ENCODE measurements at regions of chr6 and their contacts with region 1.

Region 1: GRCh38 chr6:164159061-164159460 is 744.5 kb downstream of the QKI start:
- DNase-seq: no peak
- H3K4me3 ChIP-seq: no peak overlapping the region
- CTCF ChIP-seq: no peak
- POLR2A ChIP-seq: no peak

Region 2: DNA sequence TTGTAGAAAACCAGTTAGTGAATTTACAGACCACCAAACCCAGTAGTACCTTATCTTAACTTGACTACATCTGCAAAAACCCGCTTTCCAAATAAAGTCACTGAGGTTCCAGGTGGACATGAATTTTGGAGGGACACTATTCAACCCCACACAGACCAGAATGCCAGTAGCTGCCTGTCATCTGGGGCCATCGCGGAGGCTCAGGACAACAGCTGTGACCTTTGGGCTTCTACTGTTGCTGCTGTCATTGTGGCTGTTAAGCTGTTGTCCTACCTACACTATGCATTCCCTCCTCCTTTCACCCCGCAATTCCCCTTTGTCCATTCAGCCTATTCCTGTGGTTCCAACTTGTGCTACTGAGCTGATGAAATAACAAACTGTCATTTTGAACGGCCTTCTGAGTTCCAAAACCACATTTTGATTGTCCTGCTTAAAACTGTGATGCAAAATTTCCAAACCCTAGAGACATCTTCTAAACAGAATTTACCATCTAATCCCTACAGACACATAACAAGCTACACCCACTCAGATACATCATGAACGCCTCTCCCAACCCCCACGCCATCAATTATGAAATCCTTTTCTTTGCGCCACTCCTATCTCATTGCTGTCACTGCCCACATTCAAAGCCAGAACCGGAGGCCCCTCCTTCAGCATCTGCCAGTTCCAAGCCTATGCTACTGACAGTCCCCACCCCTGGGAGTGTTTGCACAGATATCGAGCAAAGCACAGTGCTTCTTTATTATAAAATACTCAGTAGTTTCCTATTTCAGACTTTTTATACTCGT is 1025.3 kb after region 1 on chr6:
- intact Hi-C with region 1: no loop called
- DNase-seq: peak in 1 of 2 donors; percentile 18
- H3K4me3 ChIP-seq: no peak overlapping the region
- CTCF ChIP-seq: no peak
- POLR2A ChIP-seq: no peak

Region 3: DNA sequence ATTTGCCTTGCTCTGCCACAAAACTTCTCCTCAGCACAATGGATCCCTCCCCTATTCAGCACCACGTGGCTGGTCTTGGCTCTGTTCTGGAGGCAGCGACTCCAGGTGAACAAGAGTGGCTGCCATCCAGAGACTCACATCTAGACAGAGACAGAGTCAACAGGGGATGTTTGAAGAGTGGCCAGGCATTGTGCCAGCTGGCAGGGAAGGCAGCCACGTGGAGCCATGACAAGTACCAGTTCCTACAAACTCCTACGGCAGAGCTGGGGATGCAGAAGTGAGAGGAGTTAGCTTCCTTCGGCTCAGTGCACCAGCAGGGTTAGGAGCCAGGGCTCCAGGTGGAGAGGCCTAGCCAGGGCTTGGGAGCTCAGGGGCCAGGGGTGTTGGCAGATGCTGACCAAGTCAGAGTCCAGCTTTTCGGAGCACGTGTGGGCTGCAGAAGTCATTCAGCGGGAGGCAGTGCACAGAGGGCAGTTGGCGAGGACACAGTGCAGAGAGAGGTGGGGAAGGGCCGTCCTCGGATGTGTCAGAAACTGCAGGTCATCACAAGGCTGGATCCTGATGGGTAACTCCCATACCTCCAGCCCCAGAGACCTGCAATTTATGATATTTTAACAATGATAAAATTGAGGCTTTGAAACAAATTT is 1675.7 kb after region 1 on chr6:
- intact Hi-C with region 1: loop called (anchors 5 kb)
- DNase-seq: peak in 1 of 2 donors; percentile 26
- H3K4me3 ChIP-seq: no peak overlapping the region
- CTCF ChIP-seq: no peak
- POLR2A ChIP-seq: no peak

Measured in lower leg skin (tissue), 4 donors.